Mammary epithelial cell (primary cell): ENCODE measurements at regions of chr4 and their contacts with region 1.

Region 1: GRCh38 chr4:1899149-1900086 is 28.2 kb downstream of the NSD2 start:
- DNase-seq: peak; percentile 60
- H3K4me3 ChIP-seq: no peak overlapping the region
- H3K27ac ChIP-seq: no peak overlapping the region
- H3K4me1 ChIP-seq: no peaks in the 10 kb centered on the region
- H3K27me3 ChIP-seq: no peaks in the 10 kb centered on the region
- CTCF ChIP-seq: peak; percentile 76 to 87

Region 2: DNA sequence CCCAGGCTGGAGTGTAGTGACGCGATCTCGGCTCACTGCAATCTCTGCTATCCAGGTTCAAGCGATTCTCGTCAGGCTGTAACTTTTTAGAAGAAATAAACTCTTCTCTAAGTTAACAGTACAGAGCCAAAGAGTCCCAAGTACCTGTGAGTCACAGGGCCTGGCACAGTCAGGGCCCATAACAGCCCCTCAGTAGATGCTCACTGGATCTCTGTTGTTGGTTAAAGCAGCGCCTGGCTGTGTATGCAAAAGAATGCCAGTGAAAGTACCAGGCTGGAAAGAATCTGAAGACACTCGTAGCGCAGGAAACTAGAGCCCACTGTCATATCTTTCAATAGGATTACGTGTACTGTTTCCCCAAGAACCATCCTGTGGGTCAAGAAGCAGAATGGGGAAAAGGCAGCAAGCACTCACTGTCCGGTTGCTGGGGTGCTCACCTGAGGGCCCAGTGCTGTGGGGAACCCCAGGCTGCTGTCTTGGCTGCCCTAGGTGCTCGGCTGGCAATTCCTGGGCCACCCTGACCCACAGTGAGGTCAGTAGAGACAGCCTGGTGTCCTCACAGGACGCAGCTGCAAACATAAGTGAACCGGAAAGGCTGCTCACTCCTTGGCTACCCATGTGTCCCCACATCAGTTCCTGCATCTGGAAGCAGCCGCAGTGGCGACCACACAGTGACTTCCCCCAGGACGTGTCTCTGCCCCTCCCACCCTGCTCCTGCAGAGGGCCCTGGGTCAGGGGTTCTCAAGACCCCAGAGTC is 184.2 kb before region 1 on chr4:
- CTCF ChIA-PET with region 1: no interaction called
- dilution Hi-C with region 1: no loop called
- in situ Hi-C with region 1: no loop called
- intact Hi-C with region 1: no loop called
- DNase-seq: no peak
- H3K4me3 ChIP-seq: no peak overlapping the region
- H3K27ac ChIP-seq: no peak overlapping the region
- H3K4me1 ChIP-seq: peaks cover 22% of the 10 kb centered on the region
- H3K27me3 ChIP-seq: no peaks in the 10 kb centered on the region
- CTCF ChIP-seq: no peak

Region 3: DNA sequence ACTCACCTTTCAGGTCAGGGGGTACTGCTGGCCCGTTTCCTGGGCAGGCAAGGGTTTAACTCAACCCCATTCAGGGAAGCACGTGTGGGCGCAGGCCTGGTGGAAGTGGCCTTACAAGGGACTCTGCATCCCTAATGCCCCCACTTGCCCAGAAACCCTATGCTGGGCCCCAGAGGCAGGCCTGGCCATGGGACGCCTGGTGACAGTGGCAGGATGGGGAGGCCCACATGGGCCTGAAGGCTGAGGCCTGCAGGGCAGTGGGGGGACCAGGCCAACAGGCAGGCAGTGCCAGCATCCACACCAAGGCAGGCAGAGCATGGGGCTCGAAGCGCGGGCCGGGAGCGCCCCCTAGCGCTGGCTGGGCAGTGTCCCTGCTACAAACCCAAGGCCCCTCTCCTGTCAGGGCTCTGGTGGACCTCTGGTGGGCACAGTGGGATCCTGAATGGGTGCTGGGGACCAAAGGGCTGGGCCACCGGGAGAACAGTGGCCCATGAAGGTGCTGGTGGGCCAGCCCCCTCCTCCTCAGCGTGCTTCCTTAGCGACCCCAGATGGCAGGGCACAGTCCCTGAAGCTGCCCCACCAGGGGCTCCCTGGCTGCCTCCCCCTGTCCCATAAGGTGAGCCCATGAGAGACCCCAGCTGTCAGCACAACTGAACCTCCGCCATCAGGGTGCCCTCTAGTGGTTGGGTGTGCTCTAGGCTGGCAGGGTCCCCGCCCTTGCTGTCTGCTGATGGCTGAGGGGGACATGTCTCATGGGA is 89.5 kb before region 1 on chr4:
- CTCF ChIA-PET with region 1: no interaction called
- dilution Hi-C with region 1: no loop called
- in situ Hi-C with region 1: no loop called
- intact Hi-C with region 1: loop called (anchors 1 kb)
- DNase-seq: peak; percentile 37
- H3K4me3 ChIP-seq: no peak overlapping the region
- H3K27ac ChIP-seq: no peak overlapping the region
- H3K4me1 ChIP-seq: no peaks in the 10 kb centered on the region
- H3K27me3 ChIP-seq: no peaks in the 10 kb centered on the region
- CTCF ChIP-seq: peak; percentile 67 to 86

Region 4: GRCh38 chr4:1856042-1856788 is 43.2 kb before region 1 on chr4 and contains the start of gene LETM1:
- CTCF ChIA-PET with region 1: no interaction called
- dilution Hi-C with region 1: loop called (anchors 5 kb)
- in situ Hi-C with region 1: no loop called
- intact Hi-C with region 1: loop called (anchors 1 kb)
- DNase-seq: peak; percentile 96
- H3K4me3 ChIP-seq: peak within 1 kb of the TSS; percentile 82 to 88 (median 86)
- H3K27ac ChIP-seq: peak within 1 kb of the TSS; percentile 57
- H3K4me1 ChIP-seq: peaks cover 28% of the 10 kb centered on the region
- H3K27me3 ChIP-seq: no peaks in the 10 kb centered on the region
- CTCF ChIP-seq: no peak
- total RNA-seq, gene LETM1: 71.2 to 79.6 TPM

Region 5: DNA sequence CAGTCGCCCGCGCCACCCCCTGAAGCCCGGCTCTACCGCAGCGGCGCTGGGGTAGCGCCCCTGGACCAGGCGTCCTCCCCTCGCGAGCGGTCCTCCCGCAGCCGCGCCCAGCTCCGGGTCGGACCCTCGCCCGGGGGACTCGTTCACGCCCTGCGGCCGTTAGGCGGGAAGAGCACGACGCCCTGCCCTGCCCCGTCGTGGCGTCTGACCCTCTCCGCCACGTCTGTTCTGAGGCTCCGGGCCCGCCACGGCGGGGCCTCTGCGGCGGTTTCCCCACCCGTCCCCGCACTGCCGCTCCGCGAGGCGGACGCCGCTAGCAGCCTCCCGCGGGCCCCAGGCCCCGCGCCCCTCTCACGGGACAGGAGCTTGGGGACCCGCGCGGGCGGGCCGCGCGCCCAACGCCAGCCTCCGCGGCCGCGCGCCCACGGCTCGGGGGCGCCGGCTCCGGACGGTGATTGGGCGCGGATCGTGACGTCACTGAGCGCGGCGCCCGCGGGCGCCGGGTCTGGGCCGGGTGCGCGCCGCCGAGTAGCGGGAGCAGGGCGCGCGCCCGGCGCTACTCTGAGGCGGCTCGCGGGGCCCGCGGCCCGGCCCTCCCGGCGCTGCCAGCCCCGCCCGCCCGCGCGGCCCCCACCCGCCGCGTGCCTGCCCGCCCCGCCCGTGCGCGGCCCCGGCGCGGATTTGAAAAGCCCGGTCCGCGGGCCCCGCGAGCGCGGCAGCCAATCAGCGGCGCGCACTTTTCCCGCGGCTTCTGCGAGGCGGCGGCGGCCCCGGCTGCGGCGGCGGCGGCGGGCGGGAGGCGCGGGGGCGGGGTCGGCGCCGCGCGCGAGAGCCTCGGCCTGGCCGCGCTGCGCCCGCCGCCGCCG is 28.6 kb before region 1 on chr4 and contains the start of gene NSD2:
- CTCF ChIA-PET with region 1: no interaction called
- dilution Hi-C with region 1: no loop called
- in situ Hi-C with region 1: no loop called
- intact Hi-C with region 1: loop called (anchors 1 kb)
- DNase-seq: peak; percentile 83
- H3K4me3 ChIP-seq: peak within 1 kb of the TSS; percentile 72 to 86 (median 79)
- H3K27ac ChIP-seq: peak within 1 kb of the TSS; percentile 87
- H3K4me1 ChIP-seq: peaks cover 21% of the 10 kb centered on the region
- H3K27me3 ChIP-seq: no peaks in the 10 kb centered on the region
- CTCF ChIP-seq: no peak
- total RNA-seq, gene NSD2: 23.2 to 68.8 TPM

Region 6: GRCh38 chr4:1939664-1940509 is 40.5 kb after region 1 on chr4:
- CTCF ChIA-PET with region 1: interaction called, 20 read pairs
- dilution Hi-C with region 1: loop called (anchors 5 kb)
- in situ Hi-C with region 1: no loop called
- intact Hi-C with region 1: no loop called
- DNase-seq: peak; percentile 88
- H3K4me3 ChIP-seq: no peak overlapping the region
- H3K27ac ChIP-seq: peak overlapping the region; percentile 24
- H3K4me1 ChIP-seq: peaks cover 19% of the 10 kb centered on the region
- H3K27me3 ChIP-seq: no peaks in the 10 kb centered on the region
- CTCF ChIP-seq: no peak

Region 7: DNA sequence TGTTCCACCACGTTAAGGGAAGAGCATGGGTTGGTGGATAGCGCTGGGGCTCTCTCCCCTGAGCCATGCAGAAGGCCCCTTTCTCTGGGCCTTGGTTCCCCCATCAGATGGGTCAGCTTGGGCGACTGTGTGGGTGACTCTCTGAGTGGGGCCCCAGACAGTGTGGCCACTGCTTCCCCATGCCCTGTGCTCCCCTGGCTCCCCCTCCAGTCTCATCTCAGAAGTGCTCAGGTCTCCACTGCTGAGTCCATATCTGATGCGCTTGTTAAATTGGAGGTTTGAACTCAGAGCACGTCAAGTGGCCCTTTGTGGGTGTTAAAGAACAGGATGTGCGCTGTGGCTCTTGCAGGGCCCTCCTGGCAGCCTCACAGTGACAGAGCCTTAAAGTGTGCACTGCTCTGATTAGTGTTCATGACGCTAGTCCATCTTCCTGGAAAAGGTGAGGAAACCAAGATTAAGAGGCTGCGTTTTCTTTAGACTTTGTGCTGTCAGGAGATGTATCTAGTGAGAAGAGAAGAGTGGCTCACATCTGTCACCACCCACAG is 49.5 kb after region 1 on chr4:
- CTCF ChIA-PET with region 1: no interaction called
- dilution Hi-C with region 1: loop called (anchors 5 kb)
- in situ Hi-C with region 1: no loop called
- intact Hi-C with region 1: no loop called
- DNase-seq: no peak
- H3K4me3 ChIP-seq: no peak overlapping the region
- H3K27ac ChIP-seq: no peak overlapping the region
- H3K4me1 ChIP-seq: no peaks in the 10 kb centered on the region
- H3K27me3 ChIP-seq: no peaks in the 10 kb centered on the region
- CTCF ChIP-seq: no peak

Region 8: DNA sequence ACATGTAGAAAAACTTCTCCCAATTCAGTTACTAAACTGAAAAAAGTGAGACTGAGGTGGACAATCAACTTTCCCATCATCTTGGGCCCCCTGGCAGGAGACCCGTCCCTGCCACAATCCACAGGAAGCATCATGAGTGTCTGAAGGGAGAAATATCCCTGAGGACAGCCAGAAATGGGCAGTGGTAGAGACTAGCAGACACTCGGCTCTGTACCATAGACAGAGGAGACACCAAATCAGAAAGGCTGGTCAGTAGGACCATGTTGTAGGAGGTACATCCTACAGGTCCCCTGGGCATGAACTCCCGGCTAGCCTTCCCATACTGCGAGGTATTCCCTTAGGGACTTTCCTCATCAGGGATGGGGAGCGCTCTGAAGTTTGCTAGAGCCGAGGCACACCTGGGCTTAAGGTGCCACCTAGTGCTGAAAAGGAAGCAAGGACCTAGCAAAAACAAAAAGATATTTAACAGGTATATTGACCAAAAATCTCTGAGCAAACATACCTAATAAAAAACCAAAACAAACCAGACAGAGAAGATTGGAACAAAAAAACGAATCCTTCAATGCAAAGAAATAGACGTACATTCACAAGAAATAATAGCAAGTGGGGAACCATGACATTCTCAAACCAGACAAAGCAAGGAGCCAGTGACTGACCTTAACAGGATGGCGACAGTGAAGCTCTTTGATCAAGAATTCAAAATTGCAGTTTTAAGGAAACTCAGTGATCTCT is 286.9 kb after region 1 on chr4:
- CTCF ChIA-PET with region 1: no interaction called
- dilution Hi-C with region 1: no loop called
- in situ Hi-C with region 1: loop called in 1 of 2 experiments (anchors 25 kb)
- intact Hi-C with region 1: no loop called
- DNase-seq: peak; percentile 58
- H3K4me3 ChIP-seq: no peak overlapping the region
- H3K27ac ChIP-seq: no peak overlapping the region
- H3K4me1 ChIP-seq: no peaks in the 10 kb centered on the region
- H3K27me3 ChIP-seq: no peaks in the 10 kb centered on the region
- CTCF ChIP-seq: peak; percentile 53 to 82